ENCODE measurements at regions of chr12 and their contacts with region 1.

Region 1: DNA sequence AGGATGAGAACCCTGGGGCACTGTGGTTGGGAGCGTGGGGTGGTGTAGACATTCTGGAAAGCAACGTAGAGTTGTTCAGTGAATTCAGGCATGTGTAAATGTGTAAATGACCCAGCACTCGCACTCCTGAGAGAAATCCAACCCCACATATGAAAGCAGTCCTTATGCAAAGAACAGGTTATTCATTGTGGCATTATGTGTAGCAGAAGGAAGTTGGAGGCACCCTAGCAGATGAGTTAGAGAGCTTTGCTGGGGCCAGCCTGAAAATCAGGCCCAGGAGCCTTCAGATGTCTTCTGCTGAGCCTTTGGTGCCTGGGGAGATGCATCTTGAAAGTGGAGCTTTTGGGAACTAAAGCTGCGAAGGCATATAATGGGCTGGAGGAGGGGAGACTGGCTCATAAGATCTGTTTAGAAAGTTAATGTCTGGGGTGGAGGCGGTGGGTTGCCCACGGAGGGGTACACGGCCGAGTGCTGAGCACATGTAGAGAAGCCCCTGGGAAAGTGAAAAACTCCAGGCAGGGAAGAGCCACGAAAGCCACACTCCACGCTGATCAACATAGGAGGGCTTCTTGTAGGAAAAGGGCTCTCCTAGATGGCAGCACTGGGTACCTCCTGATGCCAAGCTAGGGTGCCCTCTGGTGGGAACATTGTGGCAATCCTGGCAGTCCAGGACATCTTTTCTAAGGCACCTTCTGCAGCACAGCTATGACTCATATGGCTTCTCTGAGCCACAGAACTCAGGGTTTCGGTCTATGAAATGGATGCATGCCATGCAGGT is 6.0 kb upstream of the KRT83 start:
- DNase-seq: peak; percentile 48 to 89 (median 72)
- ATAC-seq: peak; percentile 98 to 99 (median 98)
- H3K4me3 ChIP-seq: no peak overlapping the region
- H3K4me3 Mint-ChIP-seq: no peak overlapping the region
- H3K27ac ChIP-seq: no peak overlapping the region
- H3K27ac Mint-ChIP-seq: no peak overlapping the region
- H3K4me1 ChIP-seq: peaks cover 0 to 9% of the 10 kb centered on the region in 2 experiments
- H3K4me1 Mint-ChIP-seq: peaks cover 4 to 9% (median 8%) of the 10 kb centered on the region in 3 donors
- H3K27me3 ChIP-seq: peaks cover 0 to 24% of the 10 kb centered on the region in 2 experiments
- H3K27me3 Mint-ChIP-seq: peaks cover 13 to 14% of the 10 kb centered on the region in 2 donors

Region 2: GRCh38 chr12:52155048-52155868 is 172.0 kb before region 1 on chr12:
- CTCF ChIA-PET with region 1: interaction called, 6 to 12 read pairs
- POLR2A ChIA-PET with region 1: no interaction called
- DNase-seq: peak in 33 of 35 experiments; percentile 21 to 76 (median 55)
- ATAC-seq: peak; percentile 58 to 85 (median 67)
- H3K4me3 ChIP-seq: no peak overlapping the region
- H3K4me3 Mint-ChIP-seq: peak overlapping the region in 1 of 3 donors; percentile 58
- H3K27ac ChIP-seq: peak overlapping the region; percentile 91
- H3K27ac Mint-ChIP-seq: peak overlapping the region; percentile 78 to 87
- H3K4me1 ChIP-seq: peaks cover 18 to 49% of the 10 kb centered on the region in 2 experiments
- H3K4me1 Mint-ChIP-seq: peaks cover 23 to 57% (median 39%) of the 10 kb centered on the region in 3 donors
- H3K27me3 ChIP-seq: peaks cover 0 to 16% of the 10 kb centered on the region in 2 experiments
- H3K27me3 Mint-ChIP-seq: peaks cover 0 to 5% of the 10 kb centered on the region in 2 donors

Region 3: GRCh38 chr12:52436000-52436827 is 109.0 kb after region 1 on chr12:
- CTCF ChIA-PET with region 1: no interaction called
- POLR2A ChIA-PET with region 1: no interaction called
- DNase-seq: no peak
- ATAC-seq: no peak
- H3K4me3 ChIP-seq: no peak overlapping the region
- H3K4me3 Mint-ChIP-seq: no peak overlapping the region
- H3K27ac ChIP-seq: no peak overlapping the region
- H3K27ac Mint-ChIP-seq: no peak overlapping the region
- H3K4me1 ChIP-seq: no peaks in the 10 kb centered on the region
- H3K4me1 Mint-ChIP-seq: no peaks in the 10 kb centered on the region
- H3K27me3 ChIP-seq: peaks cover 2 to 39% of the 10 kb centered on the region in 2 experiments
- H3K27me3 Mint-ChIP-seq: peaks cover 34 to 48% of the 10 kb centered on the region in 2 donors